Activated CD8-positive, alpha-beta T cell treated with anti-CD3 and anti-CD28 coated beads, Interleukin-2, amount 10 ng/mL, durations not matched to agents 7 days and 5 days (primary cell): ENCODE measurements at regions of chr12 and their contacts with region 1.

Region 1: GRCh38 chr12:55073043-55074022 is 52.9 kb upstream of the OR9K2 start:
- DNase-seq: peak; percentile 87
- ATAC-seq: peak; percentile 65
- H3K4me3 Mint-ChIP-seq: no peak overlapping the region
- H3K27ac Mint-ChIP-seq: no peak overlapping the region
- H3K4me1 Mint-ChIP-seq: peaks cover 7% of the 10 kb centered on the region
- H3K27me3 Mint-ChIP-seq: peaks cover 29% of the 10 kb centered on the region

Region 2: GRCh38 chr12:54701940-54702592 is 371.3 kb before region 1 on chr12:
- CTCF ChIA-PET with region 1: interaction called, 77 read pairs
- POLR2A ChIA-PET with region 1: no interaction called
- DNase-seq: peak; percentile 46
- ATAC-seq: peak; percentile 64
- H3K4me3 Mint-ChIP-seq: no peak overlapping the region
- H3K27ac Mint-ChIP-seq: no peak overlapping the region
- H3K4me1 Mint-ChIP-seq: no peaks in the 10 kb centered on the region
- H3K27me3 Mint-ChIP-seq: peaks cover 16% of the 10 kb centered on the region

Region 3: DNA sequence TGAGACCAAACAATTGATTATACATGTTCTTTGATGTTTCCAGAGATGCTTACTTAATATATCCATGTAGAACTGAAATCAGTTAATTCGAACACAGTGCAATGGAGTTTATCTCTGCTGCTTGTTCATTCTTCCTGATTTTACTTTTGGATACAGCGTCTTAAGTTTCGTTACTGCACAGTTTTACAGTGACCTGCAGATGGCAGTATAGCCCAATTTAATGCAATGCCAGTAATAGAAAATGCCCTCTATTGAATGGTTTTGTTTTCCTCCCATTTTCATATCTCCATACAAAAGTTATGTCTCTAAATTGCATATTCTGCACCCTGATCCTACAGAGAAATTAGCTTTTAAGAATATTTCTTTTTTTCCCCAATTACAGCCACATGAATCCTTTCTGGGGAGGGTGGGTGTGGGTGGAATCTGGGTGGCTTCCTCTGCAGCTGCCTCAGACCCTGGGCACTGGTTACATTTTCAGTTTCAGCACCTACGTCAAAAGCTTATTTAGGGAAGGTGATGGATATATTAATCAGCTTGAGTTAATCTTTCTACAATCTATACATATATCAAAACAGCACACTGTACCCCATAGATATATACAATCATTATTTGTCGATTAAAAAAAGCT is 324.0 kb before region 1 on chr12:
- CTCF ChIA-PET with region 1: interaction called, 167 read pairs
- POLR2A ChIA-PET with region 1: no interaction called
- DNase-seq: peak; percentile 71
- ATAC-seq: peak; percentile 93
- H3K4me3 Mint-ChIP-seq: peak overlapping the region; percentile 55
- H3K27ac Mint-ChIP-seq: peak overlapping the region; percentile 16
- H3K4me1 Mint-ChIP-seq: peaks cover 21% of the 10 kb centered on the region
- H3K27me3 Mint-ChIP-seq: no peaks in the 10 kb centered on the region

Region 4: DNA sequence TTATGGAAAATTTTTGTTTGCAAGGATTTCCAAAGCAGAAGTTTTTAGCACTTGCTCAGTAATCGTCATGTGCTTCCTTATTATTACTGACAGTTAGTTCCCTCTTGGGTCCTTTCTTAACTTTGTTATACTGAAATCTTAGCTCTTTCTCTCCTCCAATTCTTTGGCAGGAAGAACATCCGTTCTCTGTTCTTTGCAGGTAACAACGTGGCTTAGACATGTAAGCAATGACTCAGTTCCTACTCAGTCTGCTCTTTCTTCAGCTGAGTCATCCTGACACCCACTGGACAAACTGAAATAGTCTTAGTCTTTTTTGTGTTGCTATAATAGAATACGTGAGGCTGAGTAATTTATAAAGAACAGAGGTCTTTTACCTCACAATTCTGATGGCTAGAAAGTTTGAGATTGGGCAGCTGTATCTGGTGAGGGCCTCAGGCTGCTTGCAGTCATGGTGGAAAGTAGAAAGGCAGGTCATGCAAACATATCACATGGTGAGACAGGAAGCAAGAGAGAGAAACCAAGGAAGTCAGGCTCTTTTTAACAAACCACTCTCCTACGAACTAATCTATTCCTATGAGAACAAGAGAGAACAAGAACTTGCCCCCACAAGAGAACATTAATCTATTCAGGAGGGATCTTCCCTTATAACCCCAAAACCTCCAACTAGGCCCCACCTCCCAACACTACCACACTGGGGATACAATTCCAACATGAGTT is 137.9 kb before region 1 on chr12:
- CTCF ChIA-PET with region 1: interaction called, 11 read pairs
- POLR2A ChIA-PET with region 1: no interaction called
- DNase-seq: peak; percentile 67
- ATAC-seq: peak; percentile 91
- H3K4me3 Mint-ChIP-seq: peak overlapping the region; percentile 36
- H3K27ac Mint-ChIP-seq: peak overlapping the region; percentile 97
- H3K4me1 Mint-ChIP-seq: peaks cover 54% of the 10 kb centered on the region
- H3K27me3 Mint-ChIP-seq: no peaks in the 10 kb centered on the region

Region 5: GRCh38 chr12:54984658-54985376 is 88.5 kb before region 1 on chr12 and contains the start of gene TESPA1:
- CTCF ChIA-PET with region 1: interaction called, 117 read pairs
- POLR2A ChIA-PET with region 1: interaction called, 3 read pairs
- DNase-seq: peak; percentile 94
- ATAC-seq: peak; percentile 85
- H3K4me3 Mint-ChIP-seq: peak within 1 kb of the TSS; percentile 91
- H3K27ac Mint-ChIP-seq: peak within 1 kb of the TSS; percentile 86
- H3K4me1 Mint-ChIP-seq: peaks cover 66% of the 10 kb centered on the region
- H3K27me3 Mint-ChIP-seq: no peaks in the 10 kb centered on the region
- total RNA-seq, gene TESPA1: 81.0 to 84.6 TPM

Region 6: GRCh38 chr12:55043542-55043941 is 29.8 kb before region 1 on chr12:
- CTCF ChIA-PET with region 1: interaction called, 14 read pairs
- POLR2A ChIA-PET with region 1: no interaction called
- DNase-seq: no peak
- ATAC-seq: no peak
- H3K4me3 Mint-ChIP-seq: no peak overlapping the region
- H3K27ac Mint-ChIP-seq: no peak overlapping the region
- H3K4me1 Mint-ChIP-seq: no peaks in the 10 kb centered on the region
- H3K27me3 Mint-ChIP-seq: peaks cover 2% of the 10 kb centered on the region